PC-9 (cell line): ENCODE measurements at regions of chr1 and their contacts with region 1.

Region 1: GRCh38 chr1:58783993-58784757 is at the start of gene JUN:
- DNase-seq: peak; percentile 96 to 99
- H3K4me3 ChIP-seq: peak within 1 kb of the TSS; percentile 94
- H3K27ac ChIP-seq: peak within 1 kb of the TSS; percentile 99
- H3K4me1 ChIP-seq: peaks cover 33% of the 10 kb centered on the region
- H3K27me3 ChIP-seq: no peaks in the 10 kb centered on the region
- CTCF ChIP-seq: no peak
- total RNA-seq, gene JUN: 74.7 and 93.7 TPM in 2 replicates

Region 2: GRCh38 chr1:58739856-58740466 is 44.2 kb before region 1 on chr1:
- CTCF ChIA-PET with region 1: no interaction called
- POLR2A ChIA-PET with region 1: no interaction called
- intact Hi-C with region 1: loop called (anchors 1 kb)
- DNase-seq: peak in 1 of 2 experiments; percentile 56
- H3K4me3 ChIP-seq: no peak overlapping the region
- H3K27ac ChIP-seq: no peak overlapping the region
- H3K4me1 ChIP-seq: peaks cover 12% of the 10 kb centered on the region
- H3K27me3 ChIP-seq: no peaks in the 10 kb centered on the region
- CTCF ChIP-seq: peak; percentile 95

Region 3: GRCh38 chr1:58841455-58841854 is 57.3 kb after region 1 on chr1:
- CTCF ChIA-PET with region 1: no interaction called
- POLR2A ChIA-PET with region 1: no interaction called
- intact Hi-C with region 1: no loop called
- DNase-seq: no peak
- H3K4me3 ChIP-seq: no peak overlapping the region
- H3K27ac ChIP-seq: no peak overlapping the region
- H3K4me1 ChIP-seq: peaks cover 64% of the 10 kb centered on the region
- H3K27me3 ChIP-seq: no peaks in the 10 kb centered on the region
- CTCF ChIP-seq: peak; percentile 38; the same call in 1 of the 2 replicates

Region 4: DNA sequence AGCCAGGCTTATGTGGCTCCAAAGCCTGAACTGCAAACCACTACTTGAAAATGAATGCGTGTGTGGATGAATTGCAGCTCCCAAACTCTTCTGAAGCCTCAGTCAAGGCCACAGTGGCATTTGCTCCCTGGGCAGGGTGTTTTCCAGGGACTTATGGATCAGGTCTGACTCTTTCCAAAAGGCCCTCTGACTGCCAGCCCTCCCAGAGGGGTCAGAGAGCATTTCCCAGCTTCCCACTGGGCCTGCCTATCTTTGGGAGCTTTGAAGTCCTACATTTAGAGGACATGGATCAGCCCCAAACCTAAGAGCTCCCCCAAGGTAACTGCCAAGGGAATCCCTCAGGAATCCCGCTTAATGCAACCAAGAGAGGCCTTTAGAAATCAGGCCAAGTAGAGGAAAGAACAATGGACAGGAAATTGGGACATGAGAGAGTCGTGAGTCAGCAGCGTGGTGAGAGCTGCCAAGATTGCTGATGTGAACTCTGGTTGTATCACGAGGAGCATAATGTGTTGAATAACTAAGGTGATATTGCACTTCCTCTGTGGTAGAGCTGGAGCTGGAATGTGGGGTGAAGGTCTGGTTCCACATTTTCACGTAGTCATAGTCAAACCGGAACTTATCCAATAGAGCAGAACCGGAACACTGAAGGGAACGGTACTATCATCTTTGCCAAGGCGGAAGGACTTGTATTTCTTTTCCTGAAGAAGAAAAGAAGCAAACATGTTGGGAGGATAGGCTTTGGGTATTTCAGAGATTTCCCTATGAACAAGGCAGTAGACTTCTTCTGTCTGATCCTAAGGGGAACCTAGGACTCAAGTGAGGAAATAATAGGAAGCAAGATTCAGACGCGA is 99.1 kb after region 1 on chr1:
- CTCF ChIA-PET with region 1: no interaction called
- POLR2A ChIA-PET with region 1: interaction called, 22 read pairs
- intact Hi-C with region 1: loop called (anchors 1 kb)
- DNase-seq: peak; percentile 87 to 98
- H3K4me3 ChIP-seq: peak overlapping the region; percentile 16; the same call in 1 of the 2 replicates
- H3K27ac ChIP-seq: peak overlapping the region; percentile 99
- H3K4me1 ChIP-seq: peaks cover 68% of the 10 kb centered on the region
- H3K27me3 ChIP-seq: no peaks in the 10 kb centered on the region
- CTCF ChIP-seq: no peak

Region 5: DNA sequence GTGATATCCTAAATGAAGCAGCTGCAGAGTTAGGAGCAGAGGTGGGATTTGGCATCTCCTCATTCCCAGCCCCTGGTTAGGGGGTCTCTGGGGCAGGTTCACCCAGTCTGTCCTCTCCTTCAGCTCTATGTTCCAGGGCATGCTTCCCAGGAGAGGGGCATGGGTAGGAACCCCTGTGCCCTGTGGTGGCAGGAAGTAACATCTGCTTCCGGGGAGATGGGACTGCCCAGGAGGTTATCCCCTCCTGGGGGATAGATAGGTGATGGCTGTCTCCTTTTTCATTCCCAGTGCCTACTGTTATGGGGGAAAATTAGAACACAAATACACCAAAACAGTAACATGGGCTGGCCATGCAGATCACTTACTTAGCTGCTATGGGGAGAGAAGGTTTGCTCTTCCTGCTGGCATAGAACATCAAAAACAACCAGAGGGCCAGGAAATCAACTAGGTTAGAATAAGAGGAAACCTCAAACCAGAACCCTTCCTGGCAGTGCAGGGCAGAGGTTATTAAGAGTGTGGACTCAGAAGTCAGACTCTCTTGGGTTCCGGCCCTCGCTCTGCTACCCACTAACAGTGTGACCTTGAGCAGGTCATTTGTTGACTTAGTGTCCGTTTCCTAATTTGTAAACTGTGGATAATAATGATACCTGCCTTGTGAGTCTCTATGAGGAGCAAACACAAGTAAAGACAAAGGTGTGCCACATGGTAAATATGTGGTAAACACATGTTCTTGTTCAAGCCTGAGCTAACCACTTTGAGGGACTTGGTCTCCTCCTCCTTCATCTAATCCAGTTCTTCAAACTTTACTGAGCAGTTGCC is 157.5 kb after region 1 on chr1:
- CTCF ChIA-PET with region 1: no interaction called
- POLR2A ChIA-PET with region 1: no interaction called
- intact Hi-C with region 1: no loop called
- DNase-seq: no peak
- H3K4me3 ChIP-seq: no peak overlapping the region
- H3K27ac ChIP-seq: no peak overlapping the region
- H3K4me1 ChIP-seq: no peaks in the 10 kb centered on the region
- H3K27me3 ChIP-seq: no peaks in the 10 kb centered on the region
- CTCF ChIP-seq: no peak

Region 6: DNA sequence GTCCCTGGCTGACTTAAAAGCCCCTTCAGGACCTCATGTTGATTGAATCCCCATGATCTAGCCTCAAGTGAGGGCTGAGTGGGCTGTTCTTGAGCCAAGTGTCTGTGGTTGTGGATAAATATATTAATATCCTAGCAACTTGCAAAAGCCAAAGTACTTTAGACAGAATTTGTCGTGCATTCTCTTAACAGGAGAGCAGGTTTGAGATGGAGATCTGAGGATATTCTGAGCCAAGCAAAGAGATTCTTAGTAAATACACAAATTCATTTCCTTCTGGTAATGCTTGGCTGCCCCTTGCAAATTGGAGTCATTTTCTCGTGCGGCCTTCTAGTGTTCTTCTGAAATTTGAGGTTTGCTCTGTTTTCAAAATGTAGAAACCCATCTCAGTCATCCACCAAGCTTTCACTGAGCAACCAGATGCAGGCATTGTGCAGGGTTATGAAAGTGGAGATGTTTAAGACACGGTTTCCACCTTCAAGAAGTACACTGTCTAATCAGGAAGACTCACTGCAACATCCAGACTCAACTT is 241.8 kb after region 1 on chr1:
- CTCF ChIA-PET with region 1: interaction called, 4 read pairs
- POLR2A ChIA-PET with region 1: interaction called, 3 read pairs
- intact Hi-C with region 1: loop called (anchors 1 kb)
- DNase-seq: no peak
- H3K4me3 ChIP-seq: no peak overlapping the region
- H3K27ac ChIP-seq: no peak overlapping the region
- H3K4me1 ChIP-seq: peaks cover 46% of the 10 kb centered on the region
- H3K27me3 ChIP-seq: no peaks in the 10 kb centered on the region
- CTCF ChIP-seq: no peak

Region 7: DNA sequence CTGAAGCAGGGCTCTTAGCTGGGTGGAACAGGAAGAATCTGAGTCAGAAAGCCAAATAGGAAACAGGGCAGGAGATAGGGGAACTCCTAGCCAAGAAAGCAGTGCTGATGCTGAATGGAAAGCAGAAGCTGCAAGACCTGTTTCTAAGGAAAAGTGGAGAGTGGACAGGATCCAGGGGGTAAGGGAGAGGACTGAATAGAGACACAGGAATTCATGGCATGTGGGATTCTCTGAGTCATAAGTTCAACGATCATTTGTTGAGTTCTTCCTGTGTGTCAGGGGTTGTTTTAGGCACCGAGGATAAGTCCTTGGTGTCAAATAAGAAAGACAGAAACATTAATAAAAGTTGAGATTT is 358.9 kb after region 1 on chr1:
- CTCF ChIA-PET with region 1: no interaction called
- POLR2A ChIA-PET with region 1: interaction called, 3 read pairs
- intact Hi-C with region 1: loop called (anchors 1 kb)
- DNase-seq: peak; percentile 76 to 99
- H3K4me3 ChIP-seq: peak overlapping the region; percentile 14; the same call in 1 of the 2 replicates
- H3K27ac ChIP-seq: peak overlapping the region; percentile 94
- H3K4me1 ChIP-seq: peaks cover 87% of the 10 kb centered on the region
- H3K27me3 ChIP-seq: no peaks in the 10 kb centered on the region
- CTCF ChIP-seq: no peak

Region 8: DNA sequence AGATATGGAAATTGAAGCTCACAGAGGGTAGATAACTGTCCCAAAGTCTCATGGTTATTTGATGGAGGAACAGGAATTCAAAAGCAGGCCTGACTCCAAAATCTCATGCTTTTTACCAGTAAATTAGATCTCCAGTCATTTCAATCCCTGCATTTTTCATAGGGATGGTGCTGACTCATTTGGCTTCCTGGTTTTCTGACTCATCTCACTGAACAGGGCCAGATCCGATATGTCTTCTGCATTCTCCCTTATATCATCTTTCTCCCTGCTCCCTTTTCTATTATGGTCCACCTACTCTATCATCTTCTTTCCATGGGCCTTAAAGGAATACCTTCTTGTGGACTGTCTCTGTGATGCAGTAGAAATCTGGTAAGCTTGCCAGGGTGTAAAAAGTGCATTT is 699.9 kb after region 1 on chr1:
- CTCF ChIA-PET with region 1: no interaction called
- POLR2A ChIA-PET with region 1: no interaction called
- intact Hi-C with region 1: loop called (anchors 10 kb)
- DNase-seq: peak in 1 of 2 experiments; percentile 52
- H3K4me3 ChIP-seq: no peak overlapping the region
- H3K27ac ChIP-seq: peak overlapping the region; percentile 19
- H3K4me1 ChIP-seq: peaks cover 22% of the 10 kb centered on the region
- H3K27me3 ChIP-seq: no peaks in the 10 kb centered on the region
- CTCF ChIP-seq: no peak

Region 9: GRCh38 chr1:59759156-59759925 is 975.2 kb after region 1 on chr1:
- CTCF ChIA-PET with region 1: interaction called, 7 read pairs
- POLR2A ChIA-PET with region 1: no interaction called
- intact Hi-C with region 1: loop called (anchors 1 kb)
- DNase-seq: peak; percentile 67 to 77
- H3K4me3 ChIP-seq: peak overlapping the region; percentile 31; the same call in 1 of the 2 replicates
- H3K27ac ChIP-seq: no peak overlapping the region
- H3K4me1 ChIP-seq: peaks cover 5% of the 10 kb centered on the region
- H3K27me3 ChIP-seq: no peaks in the 10 kb centered on the region
- CTCF ChIP-seq: peak; percentile 97